HEK293 (cell line): ENCODE measurements at regions of chr6 and their contacts with region 1.

Region 1: GRCh38 chr6:109187399-109188114 is 92.2 kb downstream of the CEP57L1 start:
- H3K4me3 ChIP-seq: no peak overlapping the region
- H3K27ac ChIP-seq: no peak overlapping the region
- H3K4me1 ChIP-seq: no peaks in the 10 kb centered on the region
- CTCF ChIP-seq: peak; percentile 58; the same call in 1 of the 2 replicates

Region 2: DNA sequence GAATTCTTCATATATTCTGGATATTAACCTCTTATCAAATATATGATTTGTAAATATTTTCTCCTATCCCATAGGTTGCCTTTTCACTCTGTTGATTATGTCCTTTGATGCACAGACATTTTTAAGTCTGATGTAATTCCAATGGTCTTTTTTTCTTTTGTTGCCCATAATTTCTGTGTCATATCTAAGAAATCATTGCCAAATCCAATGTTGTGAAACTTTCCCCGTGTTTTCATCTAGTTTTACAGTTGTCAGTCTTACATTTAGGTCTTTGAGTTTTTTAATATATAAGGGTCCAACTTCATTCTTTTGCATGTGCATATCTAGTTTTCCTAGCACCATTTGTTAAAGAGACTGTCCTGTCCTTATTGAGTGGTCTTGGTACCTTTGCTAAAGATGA is 204.4 kb before region 1 on chr6:
- CTCF ChIA-PET with region 1: no interaction called
- POLR2A ChIA-PET with region 1: no interaction called
- H3K4me3 ChIP-seq: no peak overlapping the region
- H3K27ac ChIP-seq: no peak overlapping the region
- H3K4me1 ChIP-seq: no peaks in the 10 kb centered on the region
- CTCF ChIP-seq: no peak

Region 3: GRCh38 chr6:109202409-109203284 is 15.1 kb after region 1 on chr6:
- CTCF ChIA-PET with region 1: interaction called, 30 read pairs
- POLR2A ChIA-PET with region 1: no interaction called
- H3K4me3 ChIP-seq: no peak overlapping the region
- H3K27ac ChIP-seq: no peak overlapping the region
- H3K4me1 ChIP-seq: no peaks in the 10 kb centered on the region
- CTCF ChIP-seq: no peak

Region 4: DNA sequence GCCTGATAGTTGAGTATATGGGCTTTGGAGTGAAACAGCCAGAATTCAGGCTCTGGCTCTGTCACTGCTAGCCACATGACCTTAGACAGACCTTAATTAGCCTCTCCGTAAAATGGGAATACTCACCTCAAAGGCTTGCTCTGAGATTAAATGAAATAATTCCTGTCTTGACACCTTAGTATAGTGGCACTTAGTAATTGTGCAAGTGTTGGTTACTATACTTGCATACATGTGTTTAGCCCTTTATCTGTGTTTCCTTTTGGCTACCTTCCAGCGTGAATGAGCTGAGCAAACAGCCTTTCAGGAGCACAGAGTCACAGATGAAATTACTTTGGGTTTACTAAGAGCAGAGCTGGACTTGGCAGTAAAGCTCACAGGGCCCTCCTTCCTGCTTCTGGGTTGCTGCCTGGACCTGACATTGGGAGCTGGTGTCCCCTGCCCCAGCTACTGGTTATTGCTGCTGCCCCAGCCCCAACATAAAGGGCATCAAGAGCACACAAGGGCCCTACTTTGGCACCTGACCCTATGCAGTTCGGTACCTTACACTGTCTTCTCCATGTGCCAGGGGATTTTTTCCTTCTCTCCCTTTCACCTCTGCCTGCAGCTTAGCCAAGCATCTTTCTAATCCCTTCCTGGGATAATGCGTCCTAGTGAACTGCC is 162.0 kb after region 1 on chr6:
- CTCF ChIA-PET with region 1: interaction called, 12 read pairs
- POLR2A ChIA-PET with region 1: no interaction called
- H3K4me3 ChIP-seq: no peak overlapping the region
- H3K27ac ChIP-seq: no peak overlapping the region
- H3K4me1 ChIP-seq: peaks cover 3% of the 10 kb centered on the region; the same call in 1 of the 2 replicates
- CTCF ChIP-seq: no peak

Region 5: GRCh38 chr6:109382576-109383437 is 195.2 kb after region 1 on chr6:
- CTCF ChIA-PET with region 1: interaction called, 89 read pairs
- POLR2A ChIA-PET with region 1: interaction called, 9 read pairs
- H3K4me3 ChIP-seq: peak overlapping the region; percentile 78
- H3K27ac ChIP-seq: peak overlapping the region; percentile 98
- H3K4me1 ChIP-seq: peaks cover 8% of the 10 kb centered on the region
- CTCF ChIP-seq: peak; percentile 55

Region 6: GRCh38 chr6:109397020-109397419 is 209.5 kb after region 1 on chr6:
- CTCF ChIA-PET with region 1: interaction called, 31 read pairs
- POLR2A ChIA-PET with region 1: no interaction called
- H3K4me3 ChIP-seq: no peak overlapping the region
- H3K27ac ChIP-seq: no peak overlapping the region
- H3K4me1 ChIP-seq: no peaks in the 10 kb centered on the region
- CTCF ChIP-seq: no peak

Region 7: DNA sequence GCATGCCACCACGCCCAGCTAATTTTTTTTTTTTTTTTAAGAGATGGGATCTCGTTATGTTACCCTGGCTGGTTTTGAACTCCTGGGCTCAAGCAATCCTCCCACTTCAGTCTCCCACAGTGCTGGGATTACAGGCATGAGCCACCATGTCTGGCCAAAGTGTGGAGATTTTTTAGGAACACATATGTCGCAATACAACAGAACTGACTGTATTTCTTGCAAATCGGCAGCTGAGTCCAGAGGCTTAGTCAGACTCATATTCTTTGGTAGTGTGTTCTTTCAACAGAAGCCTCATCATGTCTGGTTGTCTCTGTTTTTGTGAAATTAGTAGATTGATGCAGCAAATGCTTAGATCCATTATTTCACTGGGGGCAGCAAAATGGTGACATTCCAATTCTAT is 218.6 kb after region 1 on chr6:
- CTCF ChIA-PET with region 1: interaction called, 10 read pairs
- POLR2A ChIA-PET with region 1: no interaction called
- H3K4me3 ChIP-seq: no peak overlapping the region
- H3K27ac ChIP-seq: no peak overlapping the region
- H3K4me1 ChIP-seq: no peaks in the 10 kb centered on the region
- CTCF ChIP-seq: no peak